Activated B cell treated with CpG ODN at 0.5 μM for 24 hours (primary cell): ENCODE measurements at regions of chr2 and their contacts with region 1.

Region 1: GRCh38 chr2:38394903-38395341 is 17.8 kb upstream of the ATL2 start:
- DNase-seq: no peak
- ATAC-seq: no peak
- H3K4me3 Mint-ChIP-seq: no peak overlapping the region
- H3K27ac Mint-ChIP-seq: no peak overlapping the region
- H3K4me1 Mint-ChIP-seq: no peaks in the 10 kb centered on the region
- H3K27me3 Mint-ChIP-seq: peaks cover 12% of the 10 kb centered on the region
- CTCF ChIP-seq: no peak

Region 2: GRCh38 chr2:38076606-38077430 is 318.1 kb before region 1 on chr2:
- CTCF ChIA-PET with region 1: no interaction called
- POLR2A ChIA-PET with region 1: no interaction called
- intact Hi-C with region 1: no loop called
- DNase-seq: peak; percentile 26
- ATAC-seq: peak; percentile 55
- H3K4me3 Mint-ChIP-seq: peak overlapping the region; percentile 80
- H3K27ac Mint-ChIP-seq: no peak overlapping the region
- H3K4me1 Mint-ChIP-seq: peaks cover 28% of the 10 kb centered on the region
- H3K27me3 Mint-ChIP-seq: peaks cover 59% of the 10 kb centered on the region
- CTCF ChIP-seq: no peak

Region 3: GRCh38 chr2:38409156-38410122 is 14.5 kb after region 1 on chr2:
- CTCF ChIA-PET with region 1: no interaction called
- POLR2A ChIA-PET with region 1: no interaction called
- intact Hi-C with region 1: loop called (anchors 1 kb)
- DNase-seq: no peak
- ATAC-seq: peak; percentile 65
- H3K4me3 Mint-ChIP-seq: peak overlapping the region; percentile 20
- H3K27ac Mint-ChIP-seq: peak overlapping the region; percentile 47
- H3K4me1 Mint-ChIP-seq: peaks cover 22% of the 10 kb centered on the region
- H3K27me3 Mint-ChIP-seq: no peaks in the 10 kb centered on the region
- CTCF ChIP-seq: no peak